Activated CD4-positive, alpha-beta memory T cell treated with anti-CD3 and anti-CD28 coated beads, Interleukin-2, amount 10 ng/mL, durations not matched to agents 7 days and 5 days (primary cell): ENCODE measurements at regions of chr1 and their contacts with region 1.

Region 1: GRCh38 chr1:207499573-207499972 is 3.6 kb downstream of the CR1 start:
- DNase-seq: peak; percentile 73
- H3K4me3 Mint-ChIP-seq: no peak overlapping the region
- H3K27ac Mint-ChIP-seq: no peak overlapping the region
- H3K4me1 Mint-ChIP-seq: peaks cover 10% of the 10 kb centered on the region
- H3K27me3 Mint-ChIP-seq: peaks cover 58% of the 10 kb centered on the region

Region 2: DNA sequence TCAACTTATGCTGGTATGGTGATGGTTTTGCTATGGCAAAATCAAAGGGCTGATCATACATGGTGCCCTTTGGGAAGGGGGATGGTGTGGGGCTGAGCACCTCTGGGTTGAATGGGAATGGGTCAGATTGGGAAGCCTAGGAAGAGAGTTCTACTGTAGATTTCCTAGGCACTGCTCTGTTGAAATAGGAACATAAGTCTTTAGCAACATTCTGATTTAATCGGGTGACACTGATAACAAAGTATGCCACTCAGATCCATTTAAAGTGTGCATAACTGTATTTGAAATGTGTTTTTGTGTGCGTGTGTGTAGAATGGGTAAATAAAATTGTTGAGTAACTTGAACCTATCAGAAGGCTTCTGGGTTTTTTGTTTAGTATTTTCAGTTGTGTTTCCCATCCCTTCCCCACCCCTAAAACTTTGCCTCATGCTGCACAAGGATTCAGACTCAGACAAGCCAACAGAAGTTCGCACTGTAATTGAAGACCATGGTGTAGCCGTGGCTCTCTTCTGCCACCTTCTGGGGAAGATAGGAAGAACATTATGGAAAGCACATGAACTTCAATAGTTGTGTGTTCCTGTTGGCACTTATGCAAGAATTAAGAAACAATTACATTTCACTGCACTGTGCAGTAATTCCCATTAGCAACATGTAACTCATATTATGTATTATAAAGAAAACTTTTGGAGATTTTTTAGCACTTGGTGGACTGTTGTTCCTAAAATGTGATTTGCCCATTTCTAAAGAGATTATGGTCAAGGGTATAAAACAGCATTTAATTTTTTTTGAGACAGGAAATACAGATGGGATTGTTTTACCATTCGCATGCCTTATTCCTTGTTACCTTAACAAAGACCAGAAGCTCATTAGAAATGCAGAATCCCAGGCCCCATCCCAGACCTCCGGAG is 421.8 kb before region 1 on chr1:
- CTCF ChIA-PET with region 1: interaction called, 31 read pairs
- POLR2A ChIA-PET with region 1: no interaction called
- DNase-seq: peak; percentile 70
- H3K4me3 Mint-ChIP-seq: no peak overlapping the region
- H3K27ac Mint-ChIP-seq: no peak overlapping the region
- H3K4me1 Mint-ChIP-seq: peaks cover 1% of the 10 kb centered on the region
- H3K27me3 Mint-ChIP-seq: peaks cover 47% of the 10 kb centered on the region

Region 3: DNA sequence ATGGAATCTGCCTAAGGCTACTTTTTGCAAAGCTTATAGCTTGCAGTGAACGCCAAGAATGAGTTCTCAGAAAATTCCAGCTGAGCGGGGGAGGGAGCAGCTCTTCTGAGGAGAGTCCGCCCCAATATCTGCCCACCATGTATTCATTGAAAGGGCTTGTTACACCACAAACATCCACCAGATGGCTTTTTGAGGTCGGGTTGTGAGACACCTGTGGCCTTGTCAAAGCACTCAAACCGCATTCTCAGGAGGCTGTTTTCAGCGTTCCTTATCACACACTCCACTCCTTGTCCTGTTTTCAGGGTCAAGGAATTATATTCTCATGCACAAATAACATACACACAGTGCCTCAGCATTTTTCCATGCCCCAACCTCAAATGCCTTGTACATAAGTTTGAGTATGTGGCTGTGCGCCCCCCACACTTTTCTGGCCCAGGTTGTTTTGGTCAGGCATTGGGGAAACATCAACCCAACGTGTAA is 414.8 kb before region 1 on chr1:
- CTCF ChIA-PET with region 1: interaction called, 31 read pairs
- POLR2A ChIA-PET with region 1: interaction called, 3 read pairs
- DNase-seq: peak; percentile 59
- H3K4me3 Mint-ChIP-seq: no peak overlapping the region
- H3K27ac Mint-ChIP-seq: no peak overlapping the region
- H3K4me1 Mint-ChIP-seq: peaks cover 18% of the 10 kb centered on the region
- H3K27me3 Mint-ChIP-seq: peaks cover 45% of the 10 kb centered on the region

Region 4: GRCh38 chr1:207248544-207249198 is 250.9 kb before region 1 on chr1:
- CTCF ChIA-PET with region 1: no interaction called
- POLR2A ChIA-PET with region 1: no interaction called
- DNase-seq: no peak
- H3K4me3 Mint-ChIP-seq: no peak overlapping the region
- H3K27ac Mint-ChIP-seq: no peak overlapping the region
- H3K4me1 Mint-ChIP-seq: peaks cover 1% of the 10 kb centered on the region
- H3K27me3 Mint-ChIP-seq: peaks cover 10% of the 10 kb centered on the region

Region 5: DNA sequence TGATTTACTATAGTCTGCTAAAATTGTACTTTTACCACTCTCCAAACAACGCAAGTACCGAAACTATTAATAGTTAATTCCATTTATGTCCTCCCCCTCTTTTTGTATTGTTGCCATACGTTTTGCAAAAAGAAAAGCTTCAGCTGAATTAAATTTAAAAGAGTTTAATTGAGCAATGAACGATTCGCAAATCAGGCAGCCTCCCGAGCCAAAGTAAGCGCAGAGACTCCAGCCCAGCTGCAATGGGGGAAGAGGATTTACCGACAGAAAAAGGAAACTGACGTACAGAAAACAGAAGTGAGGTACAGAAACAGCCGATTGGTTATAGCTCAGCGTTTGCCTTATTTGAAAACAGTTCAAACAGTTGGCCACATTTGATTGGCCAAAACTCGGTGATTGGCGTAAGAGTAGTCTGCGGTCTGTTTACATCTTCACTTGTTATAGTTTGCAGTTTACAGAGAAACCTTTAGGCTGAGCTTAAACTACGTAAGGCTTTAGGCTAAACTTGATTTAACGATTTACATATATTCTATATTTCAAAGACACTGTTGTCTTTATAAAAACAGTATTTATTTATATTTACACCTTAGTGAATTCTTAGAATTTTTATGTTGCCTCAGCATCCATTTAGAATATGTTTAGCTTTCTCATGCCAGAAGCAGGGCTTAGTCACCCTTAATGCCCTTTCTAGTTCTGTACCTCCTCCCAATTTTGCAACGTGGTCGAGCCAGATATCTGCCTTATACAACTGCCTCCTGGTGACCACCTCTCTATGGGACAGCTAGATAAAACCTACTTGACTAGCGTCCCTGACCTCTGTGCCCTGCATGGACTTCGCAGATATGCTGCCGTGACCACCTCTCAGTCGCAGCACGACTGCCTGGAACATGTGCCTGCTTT is 20.2 kb after region 1 on chr1:
- CTCF ChIA-PET with region 1: no interaction called
- POLR2A ChIA-PET with region 1: no interaction called
- DNase-seq: no peak
- H3K4me3 Mint-ChIP-seq: no peak overlapping the region
- H3K27ac Mint-ChIP-seq: no peak overlapping the region
- H3K4me1 Mint-ChIP-seq: no peaks in the 10 kb centered on the region
- H3K27me3 Mint-ChIP-seq: peaks cover 20% of the 10 kb centered on the region

Region 6: DNA sequence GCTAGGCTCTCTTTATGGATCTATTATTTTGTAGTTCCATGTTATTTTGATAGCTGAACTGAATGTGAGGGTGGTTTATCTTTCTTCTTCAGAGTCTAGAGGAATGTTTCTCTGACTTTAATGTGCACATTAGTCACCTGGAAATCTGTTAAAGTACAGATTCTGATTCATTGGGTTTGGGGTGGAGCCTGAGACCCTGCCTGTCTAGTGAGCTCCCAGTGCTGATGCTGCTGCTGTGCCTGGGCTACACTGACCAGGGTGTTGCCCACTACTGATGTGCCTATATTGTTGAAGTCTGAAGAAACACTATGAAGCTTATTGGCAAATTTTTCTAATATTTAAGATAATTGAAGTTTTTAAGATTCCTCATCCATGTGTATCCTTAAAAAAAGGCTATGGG is 288.2 kb after region 1 on chr1:
- CTCF ChIA-PET with region 1: no interaction called
- POLR2A ChIA-PET with region 1: no interaction called
- DNase-seq: no peak
- H3K4me3 Mint-ChIP-seq: no peak overlapping the region
- H3K27ac Mint-ChIP-seq: no peak overlapping the region
- H3K4me1 Mint-ChIP-seq: no peaks in the 10 kb centered on the region
- H3K27me3 Mint-ChIP-seq: no peaks in the 10 kb centered on the region